ENCODE measurements at regions of chr17 and their contacts with region 1.

Region 1: DNA sequence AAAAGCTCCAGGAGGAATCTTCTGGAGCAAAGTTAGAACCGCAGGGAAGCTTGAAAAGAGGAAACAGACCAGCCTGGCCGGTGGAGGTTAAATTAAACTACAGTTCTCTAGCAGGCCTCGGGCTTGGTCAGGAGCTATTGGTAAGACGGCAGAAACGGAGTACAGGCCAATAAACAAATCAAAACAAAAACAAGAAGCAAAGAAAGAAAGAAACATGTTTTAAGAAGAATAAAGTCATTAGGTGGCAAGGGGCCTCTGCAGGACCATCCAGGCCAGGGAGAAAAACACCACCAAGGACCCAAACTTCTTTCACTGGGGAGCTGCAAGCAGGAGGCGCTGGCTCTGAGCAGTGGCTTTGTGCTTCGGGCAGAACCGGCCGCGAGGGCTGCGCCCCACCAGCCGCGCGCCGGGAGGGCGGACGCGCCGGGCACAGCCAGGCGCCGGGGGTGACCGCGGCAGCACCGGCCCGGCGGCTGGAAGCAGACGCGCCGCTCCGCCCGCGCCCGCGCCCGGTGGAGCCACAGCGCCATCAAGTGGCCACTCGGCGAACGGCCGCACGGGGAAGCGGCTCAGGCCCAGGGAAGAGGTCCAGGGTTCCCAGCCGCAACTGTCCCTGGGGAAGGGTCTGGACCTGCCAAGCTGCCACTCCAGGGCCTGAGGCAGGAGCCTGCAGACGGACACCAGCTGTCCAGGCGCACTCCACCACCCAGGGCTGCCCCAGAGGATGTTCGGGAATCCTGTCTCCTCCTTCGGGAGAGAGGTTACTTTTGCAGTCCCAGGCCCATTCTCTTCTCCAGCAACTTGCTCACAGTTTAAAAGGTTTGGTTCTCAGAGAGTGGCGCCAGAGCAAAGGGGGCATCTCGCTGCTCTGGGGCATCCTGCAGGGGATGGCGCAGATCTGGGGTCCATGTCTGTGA is 419.4 kb downstream of the SOX9 start:
- DNase-seq: peak; percentile 79 to 86
- ATAC-seq: peak; percentile 90 to 94
- H3K4me3 ChIP-seq: peak overlapping the region; percentile 22
- H3K27ac ChIP-seq: peak overlapping the region; percentile 82 to 87
- H3K4me1 ChIP-seq: peaks cover 25% of the 10 kb centered on the region
- CTCF ChIP-seq: peak; percentile 99
- EP300 ChIP-seq: no peak
- POLR2A ChIP-seq: no peak
- RAD21 ChIP-seq: peak; percentile 92 to 100

Region 2: GRCh38 chr17:72388765-72389473 is 151.3 kb before region 1 on chr17:
- CTCF ChIA-PET with region 1: interaction called, 26 read pairs
- POLR2A ChIA-PET with region 1: no interaction called
- DNase-seq: peak; percentile 87 to 90
- ATAC-seq: peak; percentile 65 to 76
- H3K4me3 ChIP-seq: no peak overlapping the region
- H3K27ac ChIP-seq: peak overlapping the region; percentile 76 to 85
- H3K4me1 ChIP-seq: peaks cover 87% of the 10 kb centered on the region
- CTCF ChIP-seq: peak; percentile 55
- EP300 ChIP-seq: peak; percentile 60 to 75; a peak in 3 of 5 replicates
- POLR2A ChIP-seq: no peak
- RAD21 ChIP-seq: peak; percentile 77 to 87

Region 3: DNA sequence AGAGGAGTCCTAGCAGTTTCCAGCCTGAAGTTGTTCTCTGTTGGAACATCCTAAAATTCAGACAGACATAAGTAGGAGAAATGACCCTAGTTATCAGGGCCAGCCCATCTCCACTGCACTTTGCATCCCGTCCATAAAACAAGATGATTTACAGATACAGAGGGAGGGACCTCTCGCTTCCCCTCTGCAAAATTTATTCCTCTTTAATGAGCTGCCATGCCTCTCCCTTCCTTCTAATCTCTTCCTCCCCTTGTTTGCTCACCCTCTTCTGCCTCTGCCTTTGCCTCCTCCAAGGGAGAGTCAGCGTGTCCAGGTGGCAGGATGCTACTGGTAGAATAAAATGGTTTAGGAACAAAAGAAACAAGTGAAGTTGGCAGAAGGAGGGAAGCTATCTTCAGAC is 68.1 kb before region 1 on chr17:
- CTCF ChIA-PET with region 1: no interaction called
- POLR2A ChIA-PET with region 1: no interaction called
- DNase-seq: no peak
- ATAC-seq: no peak
- H3K4me3 ChIP-seq: no peak overlapping the region
- H3K27ac ChIP-seq: peak overlapping the region in 1 of 2 experiments; percentile 88; a peak in 3 of 6 replicates
- H3K4me1 ChIP-seq: peaks cover 85% of the 10 kb centered on the region
- CTCF ChIP-seq: no peak
- EP300 ChIP-seq: no peak
- POLR2A ChIP-seq: no peak
- RAD21 ChIP-seq: no peak

Region 4: DNA sequence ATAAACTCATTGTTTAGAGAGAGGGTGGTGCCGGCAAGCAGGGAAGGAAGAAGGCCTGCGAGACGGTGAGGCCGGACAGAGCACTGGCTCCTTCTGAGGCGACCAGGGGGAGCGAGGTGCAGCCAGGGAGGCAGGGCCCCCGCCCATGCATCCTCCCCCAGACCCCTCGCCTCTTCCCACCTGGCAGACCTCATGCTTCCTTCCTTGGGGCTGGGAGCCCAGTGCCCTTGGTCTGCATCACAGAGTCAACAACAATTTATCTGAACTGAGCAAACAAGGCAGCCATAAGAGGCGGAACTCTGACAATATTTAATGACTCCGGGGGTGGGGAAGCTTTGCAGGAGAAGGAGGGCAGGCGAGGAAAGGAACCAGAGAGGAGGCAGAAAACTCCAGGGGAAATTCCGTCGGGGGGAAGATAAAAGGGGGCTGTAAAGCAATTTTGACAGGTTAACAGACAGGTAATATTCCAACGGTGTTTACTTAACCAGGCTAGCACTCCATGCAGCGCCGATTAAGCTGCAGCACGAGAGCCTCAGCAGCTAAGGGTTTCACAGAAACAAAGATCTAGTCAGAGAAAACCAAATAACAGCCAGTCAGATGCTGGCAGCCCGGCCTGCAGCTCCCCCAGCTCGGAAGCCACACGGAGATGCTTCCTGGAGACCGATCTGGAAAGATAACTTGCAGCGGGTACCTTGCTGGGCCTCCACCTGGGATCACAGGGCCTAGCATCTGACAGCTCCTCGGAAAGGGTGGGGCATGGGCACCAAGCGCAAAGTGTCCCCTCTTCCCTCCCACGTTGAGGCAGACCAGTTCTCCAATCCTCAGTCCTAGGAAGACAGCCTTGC is 21.3 kb before region 1 on chr17:
- CTCF ChIA-PET with region 1: interaction called, 31 read pairs
- POLR2A ChIA-PET with region 1: no interaction called
- DNase-seq: peak; percentile 64 to 84
- ATAC-seq: peak; percentile 52 to 70
- H3K4me3 ChIP-seq: peak overlapping the region; percentile 30
- H3K27ac ChIP-seq: peak overlapping the region; percentile 70 to 87
- H3K4me1 ChIP-seq: peaks cover 70% of the 10 kb centered on the region
- CTCF ChIP-seq: no peak
- EP300 ChIP-seq: peak in 1 of 2 experiments; percentile 53; a peak in 1 of 5 replicates
- POLR2A ChIP-seq: no peak
- RAD21 ChIP-seq: peak; percentile 19 to 31; a peak in 2 of 5 replicates

Region 5: GRCh38 chr17:72529386-72529785 is 10.9 kb before region 1 on chr17:
- CTCF ChIA-PET with region 1: interaction called, 43 read pairs
- POLR2A ChIA-PET with region 1: no interaction called
- DNase-seq: no peak
- ATAC-seq: peak; percentile 41 to 56; a peak in 4 of 6 replicates
- H3K4me3 ChIP-seq: no peak overlapping the region
- H3K27ac ChIP-seq: peak overlapping the region in 1 of 2 experiments; percentile 19; a peak in 1 of 6 replicates
- H3K4me1 ChIP-seq: peaks cover 44% of the 10 kb centered on the region
- CTCF ChIP-seq: no peak; the same call in 2 of the 3 replicates
- EP300 ChIP-seq: no peak
- POLR2A ChIP-seq: no peak
- RAD21 ChIP-seq: 0 out of 5 replicates have a peak, but pooled peaks of 1 of the 2 experiments have one; percentile 5

Region 6: DNA sequence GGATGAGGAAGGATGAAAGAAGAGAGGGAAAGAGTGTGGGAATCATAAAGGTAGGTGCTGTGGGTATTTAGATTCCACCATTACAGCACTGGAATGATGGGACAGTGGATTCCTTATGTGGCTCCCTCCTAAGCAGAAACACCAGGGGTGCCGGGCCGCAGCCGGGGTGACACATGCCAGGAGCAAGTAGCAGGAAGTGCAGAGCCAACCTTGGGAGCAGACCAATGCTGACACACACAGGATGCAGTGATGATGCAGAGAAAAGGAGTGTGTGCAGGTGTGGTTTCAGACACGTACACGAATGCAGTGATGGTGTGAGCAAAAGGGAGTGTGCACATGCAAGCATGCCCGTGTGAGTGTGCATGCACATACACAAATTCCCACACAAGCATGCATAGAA is 214.3 kb after region 1 on chr17:
- CTCF ChIA-PET with region 1: no interaction called
- POLR2A ChIA-PET with region 1: no interaction called
- DNase-seq: no peak
- ATAC-seq: no peak
- H3K4me3 ChIP-seq: no peak overlapping the region
- H3K27ac ChIP-seq: no peak overlapping the region
- H3K4me1 ChIP-seq: no peaks in the 10 kb centered on the region
- CTCF ChIP-seq: no peak
- EP300 ChIP-seq: no peak
- POLR2A ChIP-seq: no peak
- RAD21 ChIP-seq: no peak

Region 7: DNA sequence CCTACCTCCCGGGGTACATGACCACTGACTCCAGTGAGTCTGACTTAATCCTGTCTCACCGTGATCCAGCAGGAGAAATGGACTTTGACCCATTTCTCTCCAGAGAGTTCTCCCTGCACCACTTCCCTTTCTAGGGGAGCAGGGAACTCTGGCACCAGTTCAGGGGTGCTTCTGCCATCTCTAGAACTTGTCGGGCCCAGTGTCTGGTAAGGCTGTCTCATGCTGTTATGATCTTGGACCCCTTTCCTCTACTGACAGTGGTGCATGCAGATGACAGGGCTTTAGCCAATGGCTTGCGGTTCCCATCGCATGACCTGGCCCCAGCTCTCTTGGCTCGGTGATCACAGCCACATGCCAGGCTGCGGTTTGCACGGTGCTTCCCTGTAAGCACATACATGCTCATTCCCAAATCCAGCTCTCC is 490.3 kb after region 1 on chr17:
- CTCF ChIA-PET with region 1: no interaction called
- POLR2A ChIA-PET with region 1: no interaction called
- DNase-seq: peak in 1 of 2 experiments; percentile 26
- ATAC-seq: peak; percentile 47 to 66; a peak in 4 of 6 replicates
- H3K4me3 ChIP-seq: no peak overlapping the region
- H3K27ac ChIP-seq: peak overlapping the region in 1 of 2 experiments; percentile 49; a peak in 5 of 6 replicates
- H3K4me1 ChIP-seq: peaks cover 17% of the 10 kb centered on the region
- CTCF ChIP-seq: no peak
- EP300 ChIP-seq: no peak
- POLR2A ChIP-seq: no peak
- RAD21 ChIP-seq: no peak